ENCODE measurements at regions of chr6 and their contacts with region 1.

Region 1: DNA sequence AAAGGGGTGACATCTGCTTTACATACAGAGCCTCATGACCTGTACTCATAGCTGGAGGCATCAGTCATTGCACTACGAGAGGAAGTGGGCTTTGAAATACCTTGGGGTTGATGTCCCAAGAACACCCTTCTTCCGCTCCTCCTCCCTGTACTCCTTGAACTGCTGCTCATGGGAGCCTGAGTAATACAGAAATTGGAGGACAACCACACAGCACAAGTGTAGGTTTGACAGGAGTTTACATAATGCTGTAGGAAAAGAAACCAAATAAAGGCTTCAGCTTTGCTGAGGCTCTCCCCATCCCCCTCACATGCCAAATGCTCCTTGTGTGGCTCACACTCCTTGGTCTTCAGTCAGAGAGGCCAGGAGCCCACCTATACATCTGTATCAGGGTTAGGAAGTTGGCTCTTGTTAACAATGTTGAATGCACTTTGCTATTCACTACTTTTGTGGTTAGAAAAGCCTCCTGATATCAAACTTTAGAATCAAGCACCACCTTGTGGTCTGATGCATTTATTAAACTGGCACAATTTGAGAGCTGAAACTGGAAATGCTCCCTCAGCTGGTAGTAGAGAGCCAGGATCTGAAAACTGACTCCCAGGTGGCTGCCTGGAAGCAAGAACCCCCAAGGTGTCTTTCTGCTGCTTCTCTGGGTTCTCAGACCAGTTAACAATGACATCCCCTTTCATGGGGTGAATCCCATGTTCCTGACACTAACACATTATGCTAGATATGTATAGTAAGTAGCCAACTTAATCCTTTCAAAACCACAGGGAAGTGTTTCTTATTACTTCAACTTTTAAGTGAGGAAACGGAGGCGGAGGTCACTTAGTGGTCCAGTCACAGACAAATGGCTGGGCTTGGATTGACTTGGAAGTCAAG is 56.2 kb upstream of the EDN1 start:
- DNase-seq: peak; percentile 60
- H3K4me3 ChIP-seq: no peak overlapping the region
- H3K27ac ChIP-seq: peak overlapping the region; percentile 55
- H3K27me3 ChIP-seq: no peaks in the 10 kb centered on the region
- CTCF ChIP-seq: peak; percentile 85

Region 2: GRCh38 chr6:12134581-12134980 is 99.4 kb before region 1 on chr6:
- CTCF ChIA-PET with region 1: interaction called, 11 read pairs
- POLR2A ChIA-PET with region 1: no interaction called
- DNase-seq: no peak
- H3K4me3 ChIP-seq: no peak overlapping the region
- H3K27ac ChIP-seq: no peak overlapping the region
- H3K27me3 ChIP-seq: no peaks in the 10 kb centered on the region
- CTCF ChIP-seq: no peak